ENCODE measurements at regions of chr12 and their contacts with region 1.

Region 1: DNA sequence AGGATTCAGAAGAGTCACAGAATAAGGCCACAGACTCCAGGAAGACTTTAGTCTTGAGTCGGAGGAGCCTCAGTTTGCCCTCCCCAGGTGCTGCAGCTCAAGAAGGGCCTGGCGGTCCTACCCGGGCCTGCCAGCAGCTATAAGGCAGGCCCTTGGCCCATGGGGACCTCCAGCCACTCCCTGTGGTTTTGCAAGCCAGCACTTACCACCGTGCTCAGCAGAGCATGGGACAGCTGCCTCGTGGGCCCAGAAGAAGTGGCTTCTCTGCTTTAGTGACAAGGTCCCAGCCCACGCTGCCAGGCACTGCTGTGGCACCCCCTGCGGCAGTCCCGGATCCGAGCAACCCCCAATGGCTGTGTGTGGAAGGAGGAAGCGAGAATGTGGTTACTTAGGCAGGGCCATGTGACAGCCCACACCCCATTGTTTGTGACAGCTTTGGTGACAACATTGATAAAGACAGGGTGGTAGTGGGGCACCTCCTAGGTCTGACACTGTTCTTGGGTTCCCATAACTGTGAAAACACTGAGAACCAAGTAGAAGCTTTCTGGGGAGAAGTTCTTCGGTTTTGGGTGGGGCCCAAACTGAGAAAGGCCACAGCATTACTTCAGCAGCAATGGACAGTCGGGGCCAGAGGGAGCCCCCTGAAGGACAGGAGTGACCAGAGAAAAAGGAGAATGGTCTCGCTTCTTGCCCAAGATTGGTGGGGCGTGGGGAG is at the start of gene SELPLG:
- DNase-seq: peak; percentile 98
- ATAC-seq: peak; percentile 75
- H3K4me3 ChIP-seq: peak within 1 kb of the TSS; percentile 62 to 87 (median 78)
- H3K4me3 Mint-ChIP-seq: peak within 1 kb of the TSS; percentile 99
- H3K27ac ChIP-seq: peak within 1 kb of the TSS; percentile 92 to 95
- H3K27ac Mint-ChIP-seq: peak within 1 kb of the TSS; percentile 100
- H3K4me1 ChIP-seq: peaks cover 78 to 88% of the 10 kb centered on the region in 2 donors
- H3K4me1 Mint-ChIP-seq: peaks cover 89% of the 10 kb centered on the region
- H3K27me3 ChIP-seq: no peaks in the 10 kb centered on the region
- H3K27me3 Mint-ChIP-seq: no peaks in the 10 kb centered on the region
- CTCF ChIP-seq: peak; percentile 41
- total RNA-seq, gene SELPLG: 6.1 and 6.2 TPM in 2 replicates

Region 2: DNA sequence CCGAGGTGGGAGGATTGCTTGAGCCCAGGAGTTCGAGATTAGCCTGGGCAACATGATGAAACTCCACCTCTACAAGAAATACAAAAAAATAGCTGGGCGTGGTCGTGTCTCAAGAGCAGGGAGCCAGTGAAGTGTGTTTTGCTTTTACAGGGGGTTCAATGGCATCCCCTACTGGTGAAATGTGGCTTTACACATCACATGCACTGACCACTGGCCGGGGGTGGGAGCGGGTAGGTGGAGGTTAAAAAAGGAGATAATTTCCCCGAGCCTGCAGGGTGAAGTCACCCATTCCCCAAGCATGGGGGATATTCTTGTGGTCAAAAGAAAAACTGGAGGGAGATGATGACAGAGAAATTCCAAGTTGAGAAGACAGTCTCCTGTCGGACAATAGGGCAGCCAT is 1011.7 kb before region 1 on chr12:
- CTCF ChIA-PET with region 1: no interaction called
- POLR2A ChIA-PET with region 1: no interaction called
- intact Hi-C with region 1: no loop called
- DNase-seq: no peak
- ATAC-seq: no peak
- H3K4me3 ChIP-seq: no peak overlapping the region
- H3K4me3 Mint-ChIP-seq: no peak overlapping the region
- H3K27ac ChIP-seq: no peak overlapping the region
- H3K27ac Mint-ChIP-seq: no peak overlapping the region
- H3K4me1 ChIP-seq: no peaks in the 10 kb centered on the region
- H3K4me1 Mint-ChIP-seq: no peaks in the 10 kb centered on the region
- H3K27me3 ChIP-seq: no peaks in the 10 kb centered on the region
- H3K27me3 Mint-ChIP-seq: peaks cover 7% of the 10 kb centered on the region
- CTCF ChIP-seq: no peak

Region 3: DNA sequence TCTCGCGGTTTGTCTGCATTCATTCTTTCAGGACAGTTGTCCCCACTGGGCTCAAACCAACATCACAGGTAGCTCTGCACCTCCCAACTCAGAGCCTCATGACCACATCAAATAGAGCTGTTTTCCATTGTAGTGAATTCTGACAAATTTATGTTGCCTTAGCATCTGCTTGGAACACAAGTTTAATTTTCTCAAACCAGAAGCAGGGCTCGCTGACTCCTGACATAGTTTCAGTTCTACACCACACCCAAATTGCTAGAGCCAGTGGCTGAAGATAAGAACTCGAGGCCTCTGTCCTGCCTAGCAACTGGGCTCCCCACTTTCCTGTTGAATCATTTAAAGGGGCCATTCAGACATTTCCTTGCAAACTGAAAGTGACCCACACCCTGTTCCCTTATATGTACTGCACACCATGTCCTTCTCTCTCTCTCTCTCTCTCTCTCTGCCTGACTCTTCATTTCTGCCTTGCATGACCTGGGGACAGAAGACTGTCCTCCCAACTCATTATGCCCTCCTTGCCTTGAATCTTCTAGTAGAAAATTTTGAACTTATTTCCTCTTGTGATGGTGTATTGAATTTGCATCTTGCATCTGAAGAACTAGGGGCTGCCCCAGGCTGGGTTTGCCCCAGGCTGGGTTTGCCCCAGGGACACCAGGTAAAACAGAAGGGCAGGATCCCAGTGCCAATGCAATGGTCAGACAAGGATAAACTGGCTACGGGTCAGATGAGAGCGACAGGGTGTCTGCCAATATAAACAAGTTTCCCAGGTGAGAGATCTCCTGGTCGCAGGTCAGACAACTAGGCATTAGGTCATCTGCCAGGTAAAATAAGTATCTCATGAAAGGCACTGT is 514.3 kb before region 1 on chr12:
- CTCF ChIA-PET with region 1: no interaction called
- POLR2A ChIA-PET with region 1: no interaction called
- intact Hi-C with region 1: loop called (anchors 10 kb)
- DNase-seq: peak; percentile 69
- ATAC-seq: peak; percentile 70
- H3K4me3 ChIP-seq: peak overlapping the region in 1 of 5 experiments; percentile 12
- H3K4me3 Mint-ChIP-seq: peak overlapping the region; percentile 66
- H3K27ac ChIP-seq: peak overlapping the region; percentile 68 to 74
- H3K27ac Mint-ChIP-seq: peak overlapping the region; percentile 89
- H3K4me1 ChIP-seq: peaks cover 22 to 62% of the 10 kb centered on the region in 2 donors
- H3K4me1 Mint-ChIP-seq: peaks cover 55% of the 10 kb centered on the region
- H3K27me3 ChIP-seq: peaks cover 0 to 4% (median 0%) of the 10 kb centered on the region in 4 experiments
- H3K27me3 Mint-ChIP-seq: peaks cover 6% of the 10 kb centered on the region
- CTCF ChIP-seq: no peak

Region 4: GRCh38 chr12:108570743-108571608 is 62.7 kb before region 1 on chr12:
- CTCF ChIA-PET with region 1: interaction called, 200 read pairs
- POLR2A ChIA-PET with region 1: interaction called, 14 read pairs
- intact Hi-C with region 1: no loop called
- DNase-seq: peak; percentile 48
- ATAC-seq: no peak
- H3K4me3 ChIP-seq: no peak overlapping the region
- H3K4me3 Mint-ChIP-seq: no peak overlapping the region
- H3K27ac ChIP-seq: peak overlapping the region in 1 of 2 donors; percentile 64
- H3K27ac Mint-ChIP-seq: peak overlapping the region; percentile 80
- H3K4me1 ChIP-seq: peaks cover 56 to 76% of the 10 kb centered on the region in 2 donors
- H3K4me1 Mint-ChIP-seq: peaks cover 82% of the 10 kb centered on the region
- H3K27me3 ChIP-seq: no peaks in the 10 kb centered on the region
- H3K27me3 Mint-ChIP-seq: no peaks in the 10 kb centered on the region
- CTCF ChIP-seq: peak; percentile 41

Region 5: GRCh38 chr12:108649669-108650068 is 16.0 kb after region 1 on chr12:
- CTCF ChIA-PET with region 1: interaction called, 63 read pairs
- POLR2A ChIA-PET with region 1: interaction called, 10 read pairs
- intact Hi-C with region 1: no loop called
- DNase-seq: no peak
- ATAC-seq: no peak
- H3K4me3 ChIP-seq: no peak overlapping the region
- H3K4me3 Mint-ChIP-seq: no peak overlapping the region
- H3K27ac ChIP-seq: peak overlapping the region in 1 of 2 donors; percentile 4
- H3K27ac Mint-ChIP-seq: peak overlapping the region; percentile 3
- H3K4me1 ChIP-seq: peaks cover 26% of the 10 kb centered on the region in 2 donors
- H3K4me1 Mint-ChIP-seq: peaks cover 55% of the 10 kb centered on the region
- H3K27me3 ChIP-seq: no peaks in the 10 kb centered on the region
- H3K27me3 Mint-ChIP-seq: no peaks in the 10 kb centered on the region
- CTCF ChIP-seq: no peak

Region 6: DNA sequence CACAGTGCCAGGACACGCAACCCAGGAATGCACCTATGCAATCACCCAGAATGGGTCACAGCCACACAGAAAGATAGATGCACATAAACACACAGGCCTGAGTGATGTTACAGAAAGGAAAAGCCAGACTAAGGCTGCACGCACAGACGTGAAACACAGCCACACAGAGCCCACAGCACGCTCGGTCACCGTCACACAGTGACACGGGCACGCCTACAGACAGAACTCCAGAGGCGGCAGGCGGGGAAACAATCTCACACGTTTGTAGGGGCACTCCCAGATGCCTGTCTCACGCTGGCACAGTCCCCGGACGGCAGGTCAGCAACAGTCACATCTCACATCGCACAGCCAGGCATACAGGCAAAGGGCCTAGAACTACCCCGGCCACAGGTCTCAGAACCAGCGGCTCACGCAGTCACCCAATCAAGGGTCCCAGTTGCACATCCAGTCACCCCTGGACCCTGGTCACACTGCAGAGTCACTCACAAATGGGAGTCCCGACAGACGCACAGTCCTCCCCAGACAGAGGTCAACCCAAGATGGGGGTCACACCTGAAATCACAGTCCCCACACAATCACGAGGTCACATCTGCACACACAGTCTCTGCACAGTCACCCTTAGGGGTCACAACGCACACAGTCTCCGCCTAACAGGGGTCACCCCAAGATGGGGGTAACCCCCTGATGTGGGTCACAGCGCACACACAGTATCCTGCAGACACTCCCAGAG is 222.9 kb after region 1 on chr12:
- CTCF ChIA-PET with region 1: interaction called, 4 read pairs
- POLR2A ChIA-PET with region 1: interaction called, 4 read pairs
- intact Hi-C with region 1: loop called (anchors 5 kb)
- DNase-seq: peak; percentile 59
- ATAC-seq: peak; percentile 2
- H3K4me3 ChIP-seq: peak overlapping the region; percentile 43 to 76 (median 71)
- H3K4me3 Mint-ChIP-seq: peak overlapping the region; percentile 99
- H3K27ac ChIP-seq: peak overlapping the region in 1 of 2 donors; percentile 56
- H3K27ac Mint-ChIP-seq: peak overlapping the region; percentile 96
- H3K4me1 ChIP-seq: peaks cover 29 to 44% of the 10 kb centered on the region in 2 donors
- H3K4me1 Mint-ChIP-seq: peaks cover 52% of the 10 kb centered on the region
- H3K27me3 ChIP-seq: peaks cover 0 to 4% (median 0%) of the 10 kb centered on the region in 4 experiments
- H3K27me3 Mint-ChIP-seq: no peaks in the 10 kb centered on the region
- CTCF ChIP-seq: no peak